ENCODE measurements at regions of chr9 and their contacts with region 1.

Region 1: GRCh38 chr9:38263532-38263931 is 129.0 kb upstream of the ALDH1B1 start:
- DNase-seq: peak; percentile 52
- ATAC-seq: peak; percentile 31; the same call in 1 of the 2 replicates
- H3K4me3 ChIP-seq: no peak overlapping the region
- H3K27ac ChIP-seq: no peak overlapping the region
- H3K4me1 ChIP-seq: no peaks in the 10 kb centered on the region
- H3K27me3 ChIP-seq: no peaks in the 10 kb centered on the region
- CTCF ChIP-seq: peak; percentile 62

Region 2: GRCh38 chr9:38017149-38017884 is 246.2 kb before region 1 on chr9:
- CTCF ChIA-PET with region 1: no interaction called
- POLR2A ChIA-PET with region 1: no interaction called
- intact Hi-C with region 1: loop called (anchors 5 kb)
- DNase-seq: peak; percentile 60
- ATAC-seq: peak; percentile 43
- H3K4me3 ChIP-seq: peak overlapping the region; percentile 11; the same call in 1 of the 2 replicates
- H3K27ac ChIP-seq: peak overlapping the region; percentile 97
- H3K4me1 ChIP-seq: peaks cover 62% of the 10 kb centered on the region
- H3K27me3 ChIP-seq: no peaks in the 10 kb centered on the region
- CTCF ChIP-seq: peak; percentile 55

Region 3: GRCh38 chr9:38068866-38069629 is 194.5 kb before region 1 on chr9 and contains the start of gene SHB:
- CTCF ChIA-PET with region 1: no interaction called
- POLR2A ChIA-PET with region 1: no interaction called
- intact Hi-C with region 1: loop called (anchors 5 kb)
- DNase-seq: peak; percentile 59
- ATAC-seq: peak; percentile 41
- H3K4me3 ChIP-seq: peak within 1 kb of the TSS; percentile 95
- H3K27ac ChIP-seq: peak within 1 kb of the TSS; percentile 77
- H3K4me1 ChIP-seq: peaks cover 34% of the 10 kb centered on the region
- H3K27me3 ChIP-seq: no peaks in the 10 kb centered on the region
- CTCF ChIP-seq: 0 out of 2 replicates have a peak, but pooled peaks have one; percentile 17
- total RNA-seq, gene SHB: 56.4 and 77.1 TPM in 2 replicates

Region 4: GRCh38 chr9:38088006-38088925 is 175.3 kb before region 1 on chr9:
- CTCF ChIA-PET with region 1: interaction called, 10 read pairs
- POLR2A ChIA-PET with region 1: no interaction called
- intact Hi-C with region 1: loop called (anchors 5 kb)
- DNase-seq: peak; percentile 59
- ATAC-seq: peak; percentile 31; the same call in 1 of the 2 replicates
- H3K4me3 ChIP-seq: no peak overlapping the region
- H3K27ac ChIP-seq: no peak overlapping the region
- H3K4me1 ChIP-seq: peaks cover 5% of the 10 kb centered on the region; the same call in 1 of the 2 replicates
- H3K27me3 ChIP-seq: no peaks in the 10 kb centered on the region
- CTCF ChIP-seq: peak; percentile 89

Region 5: GRCh38 chr9:38117651-38118050 is 145.9 kb before region 1 on chr9:
- CTCF ChIA-PET with region 1: no interaction called
- POLR2A ChIA-PET with region 1: no interaction called
- intact Hi-C with region 1: no loop called
- DNase-seq: no peak
- ATAC-seq: no peak
- H3K4me3 ChIP-seq: no peak overlapping the region
- H3K27ac ChIP-seq: no peak overlapping the region
- H3K4me1 ChIP-seq: peaks cover 13% of the 10 kb centered on the region
- H3K27me3 ChIP-seq: no peaks in the 10 kb centered on the region
- CTCF ChIP-seq: no peak

Region 6: GRCh38 chr9:38160613-38161215 is 102.8 kb before region 1 on chr9:
- CTCF ChIA-PET with region 1: interaction called, 5 read pairs
- POLR2A ChIA-PET with region 1: no interaction called
- intact Hi-C with region 1: loop called (anchors 5 kb)
- DNase-seq: peak; percentile 53
- ATAC-seq: no peak
- H3K4me3 ChIP-seq: no peak overlapping the region
- H3K27ac ChIP-seq: no peak overlapping the region
- H3K4me1 ChIP-seq: 0 out of 2 replicates have a peak, but pooled peaks cover 4% of the 10 kb centered on the region
- H3K27me3 ChIP-seq: no peaks in the 10 kb centered on the region
- CTCF ChIP-seq: peak; percentile 87

Region 7: GRCh38 chr9:38284588-38285051 is 21.1 kb after region 1 on chr9:
- CTCF ChIA-PET with region 1: no interaction called
- POLR2A ChIA-PET with region 1: no interaction called
- intact Hi-C with region 1: no loop called
- DNase-seq: no peak
- ATAC-seq: no peak
- H3K4me3 ChIP-seq: no peak overlapping the region
- H3K27ac ChIP-seq: no peak overlapping the region
- H3K4me1 ChIP-seq: peaks cover 8% of the 10 kb centered on the region
- H3K27me3 ChIP-seq: no peaks in the 10 kb centered on the region
- CTCF ChIP-seq: no peak